Activated CD4-positive, alpha-beta memory T cell treated with anti-CD3 and anti-CD28 coated beads for 36 hours (primary cell): ENCODE measurements at regions of chr1 and their contacts with region 1.

Region 1: DNA sequence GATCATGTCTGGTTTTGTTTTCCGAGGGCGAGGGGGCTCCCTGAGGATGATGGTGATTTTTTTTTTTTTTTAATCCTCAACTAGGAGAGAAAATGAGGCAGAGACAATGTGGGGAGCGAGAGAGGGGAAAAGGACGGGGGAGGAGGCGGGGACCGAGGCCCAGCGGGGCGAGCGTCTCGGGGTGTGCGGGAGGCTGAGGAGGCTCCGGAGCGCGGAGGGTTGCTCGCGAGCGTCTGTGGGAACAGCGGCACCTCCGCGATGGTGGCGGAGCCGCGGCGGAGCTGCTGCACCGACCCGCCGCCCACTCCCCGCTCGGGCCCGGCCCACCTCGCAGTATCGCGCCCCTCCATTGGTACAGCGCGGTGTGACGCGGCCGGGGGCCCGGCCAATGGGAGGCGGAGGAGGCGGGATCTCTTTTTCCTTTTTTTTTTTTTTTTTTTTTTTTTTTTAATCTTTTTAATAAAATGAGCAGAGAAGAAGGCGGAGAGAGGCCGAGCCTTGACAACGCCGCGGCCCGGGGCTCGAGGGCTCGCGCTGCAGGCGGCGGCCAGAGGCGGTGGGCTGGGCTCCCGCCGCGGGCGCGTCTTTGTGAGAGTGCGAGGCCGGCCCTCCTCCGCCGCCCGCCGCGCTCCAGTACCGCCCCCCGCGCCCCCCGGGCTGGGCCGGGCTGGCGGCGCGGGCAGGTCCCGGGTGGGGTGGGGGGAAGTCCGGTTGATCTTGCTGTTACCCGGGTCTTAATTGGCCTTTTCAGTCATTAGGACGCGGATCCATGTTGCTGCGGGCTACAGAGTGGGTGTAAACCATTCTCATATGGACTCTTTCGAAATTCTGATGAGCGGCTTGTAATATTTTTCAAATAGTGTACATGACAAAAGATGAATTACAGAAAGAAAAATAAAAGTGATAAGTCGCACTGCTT is at the start of gene RERE:
- DNase-seq: peak; percentile 97
- H3K4me3 Mint-ChIP-seq: peak within 1 kb of the TSS; percentile 86
- H3K27ac Mint-ChIP-seq: peak within 1 kb of the TSS; percentile 91
- H3K4me1 Mint-ChIP-seq: peaks cover 46% of the 10 kb centered on the region
- H3K27me3 Mint-ChIP-seq: peaks cover 4% of the 10 kb centered on the region
- total RNA-seq, gene RERE: 45.0 to 50.5 TPM

Region 2: DNA sequence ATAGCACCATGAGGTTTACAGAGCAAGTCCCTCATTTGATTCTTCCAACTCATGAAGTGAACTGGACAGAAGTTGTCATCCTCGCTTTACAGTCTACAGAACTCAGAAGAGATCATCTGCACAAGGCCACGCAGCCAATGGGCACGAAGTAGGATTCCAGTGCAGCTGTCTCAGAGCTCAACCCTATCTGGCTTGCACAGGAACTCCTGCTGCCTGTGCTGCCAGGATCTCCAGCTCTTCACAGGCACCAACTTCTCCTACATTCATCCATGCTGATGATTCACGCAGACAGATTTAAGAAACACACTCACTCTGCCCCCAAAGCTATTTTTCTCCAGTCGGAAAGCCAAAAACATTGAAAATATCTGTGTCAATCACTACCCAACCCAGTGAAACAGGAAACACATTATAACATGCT is 157.2 kb before region 1 on chr1:
- CTCF ChIA-PET with region 1: no interaction called
- POLR2A ChIA-PET with region 1: interaction called, 3 read pairs
- intact Hi-C with region 1: loop called (anchors 5 kb)
- DNase-seq: no peak
- H3K4me3 Mint-ChIP-seq: no peak overlapping the region
- H3K27ac Mint-ChIP-seq: no peak overlapping the region
- H3K4me1 Mint-ChIP-seq: peaks cover 3% of the 10 kb centered on the region
- H3K27me3 Mint-ChIP-seq: no peaks in the 10 kb centered on the region